Caco-2 (cell line): ENCODE measurements at regions of chr4 and their contacts with region 1.

Region 1: DNA sequence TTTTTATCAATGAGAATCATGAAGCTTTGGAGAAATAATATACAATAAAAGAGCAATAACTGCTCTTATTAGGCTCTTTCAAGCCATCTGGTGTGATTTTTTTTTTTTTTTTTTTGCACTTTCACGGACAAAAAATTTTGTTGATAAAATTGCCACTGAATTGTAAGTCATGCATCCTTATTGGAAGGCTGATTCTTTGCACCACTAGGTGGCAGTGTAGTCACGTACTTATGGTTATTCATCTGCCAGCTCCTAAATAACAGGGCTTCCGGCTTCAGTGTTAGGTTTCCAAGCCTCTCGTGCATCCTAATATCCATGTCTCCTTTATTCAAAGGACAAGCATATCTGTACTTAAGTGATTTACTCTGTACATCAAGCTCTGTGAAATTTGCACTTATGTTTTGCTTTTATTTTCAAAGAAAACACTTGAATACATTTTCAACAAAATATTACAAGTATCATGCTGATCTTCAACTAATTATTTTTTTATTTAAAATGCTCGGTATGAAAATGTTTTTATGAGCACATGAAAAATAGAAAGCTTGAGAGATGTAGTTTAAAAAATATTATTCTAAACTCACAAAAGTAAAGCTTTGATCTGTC is 1578.3 kb upstream of the TENM3 start:
- DNase-seq: peak; percentile 66 to 67
- H3K4me3 ChIP-seq: no peak overlapping the region
- H3K4me3 Mint-ChIP-seq: no peak overlapping the region
- H3K27ac Mint-ChIP-seq: no peak overlapping the region
- H3K4me1 ChIP-seq: no peaks in the 10 kb centered on the region
- H3K4me1 Mint-ChIP-seq: no peaks in the 10 kb centered on the region
- H3K27me3 ChIP-seq: no peaks in the 10 kb centered on the region
- H3K27me3 Mint-ChIP-seq: no peaks in the 10 kb centered on the region
- CTCF ChIP-seq: peak; percentile 50 to 62

Region 2: GRCh38 chr4:180028682-180029081 is 636.2 kb before region 1 on chr4:
- CTCF ChIA-PET with region 1: no interaction called
- POLR2A ChIA-PET with region 1: no interaction called
- intact Hi-C with region 1: no loop called
- DNase-seq: peak; percentile 64 to 65
- H3K4me3 ChIP-seq: no peak overlapping the region
- H3K4me3 Mint-ChIP-seq: no peak overlapping the region
- H3K27ac Mint-ChIP-seq: no peak overlapping the region
- H3K4me1 ChIP-seq: no peaks in the 10 kb centered on the region
- H3K4me1 Mint-ChIP-seq: no peaks in the 10 kb centered on the region
- H3K27me3 ChIP-seq: no peaks in the 10 kb centered on the region
- H3K27me3 Mint-ChIP-seq: peaks cover 4% of the 10 kb centered on the region
- CTCF ChIP-seq: peak; percentile 45 to 58

Region 3: DNA sequence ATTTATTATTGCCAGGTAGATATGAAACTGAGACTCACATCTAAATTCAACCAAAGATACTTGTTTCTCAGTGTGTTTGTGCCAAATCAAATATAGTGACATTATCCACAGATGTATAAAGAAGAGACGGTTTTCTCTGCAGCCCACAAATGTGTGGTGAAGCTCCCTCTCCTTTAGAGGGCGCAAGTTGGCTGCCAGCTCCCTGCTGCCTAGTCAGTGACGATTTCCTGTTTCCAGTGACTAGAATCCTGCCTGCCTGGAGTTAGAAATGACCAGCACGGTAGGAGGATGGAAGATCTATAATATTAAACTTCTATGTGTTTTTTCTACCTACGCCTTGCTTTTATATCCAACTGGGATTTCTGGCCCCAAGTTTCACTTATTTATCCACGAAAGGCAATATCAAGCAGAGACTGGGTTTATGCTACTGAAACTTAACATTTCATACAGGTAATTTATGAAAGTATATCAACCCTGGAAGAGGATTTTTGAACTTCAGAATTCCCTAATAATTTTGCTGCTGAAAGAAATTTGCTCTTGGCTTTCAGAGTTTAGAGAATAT is 215.4 kb before region 1 on chr4:
- CTCF ChIA-PET with region 1: no interaction called
- POLR2A ChIA-PET with region 1: no interaction called
- intact Hi-C with region 1: loop called (anchors 2 kb)
- DNase-seq: peak; percentile 37 to 51
- H3K4me3 ChIP-seq: no peak overlapping the region
- H3K4me3 Mint-ChIP-seq: no peak overlapping the region
- H3K27ac Mint-ChIP-seq: no peak overlapping the region
- H3K4me1 ChIP-seq: no peaks in the 10 kb centered on the region
- H3K4me1 Mint-ChIP-seq: no peaks in the 10 kb centered on the region
- H3K27me3 ChIP-seq: no peaks in the 10 kb centered on the region
- H3K27me3 Mint-ChIP-seq: no peaks in the 10 kb centered on the region
- CTCF ChIP-seq: peak; percentile 47 to 54

Region 4: GRCh38 chr4:180828440-180829018 is 163.7 kb after region 1 on chr4:
- CTCF ChIA-PET with region 1: no interaction called
- POLR2A ChIA-PET with region 1: no interaction called
- intact Hi-C with region 1: loop called (anchors 5 kb)
- DNase-seq: peak in 1 of 2 experiments; percentile 17
- H3K4me3 ChIP-seq: no peak overlapping the region
- H3K4me3 Mint-ChIP-seq: no peak overlapping the region
- H3K27ac Mint-ChIP-seq: no peak overlapping the region
- H3K4me1 ChIP-seq: no peaks in the 10 kb centered on the region
- H3K4me1 Mint-ChIP-seq: no peaks in the 10 kb centered on the region
- H3K27me3 ChIP-seq: no peaks in the 10 kb centered on the region
- H3K27me3 Mint-ChIP-seq: peaks cover 9% of the 10 kb centered on the region
- CTCF ChIP-seq: peak; percentile 51 to 54

Region 5: DNA sequence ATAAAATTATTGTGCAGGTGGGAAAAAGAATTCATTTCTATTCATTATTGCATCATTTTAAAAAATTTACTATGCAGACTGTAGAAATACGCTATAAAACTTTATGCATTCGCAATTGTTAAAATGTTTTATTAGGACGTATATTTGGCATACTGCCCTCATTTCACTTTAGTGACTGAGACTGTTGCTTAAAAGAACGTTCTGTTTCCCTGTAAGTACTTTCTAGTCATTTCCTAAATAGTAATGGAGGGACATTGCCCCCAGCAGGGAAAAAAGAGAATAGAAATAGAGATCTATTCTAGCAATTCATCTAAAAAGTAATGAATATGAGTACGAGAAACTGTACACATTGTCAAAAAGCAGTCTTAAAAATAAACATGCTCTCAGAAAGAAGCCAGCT is 282.6 kb after region 1 on chr4:
- CTCF ChIA-PET with region 1: no interaction called
- POLR2A ChIA-PET with region 1: no interaction called
- intact Hi-C with region 1: loop called (anchors 5 kb)
- DNase-seq: no peak
- H3K4me3 ChIP-seq: no peak overlapping the region
- H3K4me3 Mint-ChIP-seq: no peak overlapping the region
- H3K27ac Mint-ChIP-seq: no peak overlapping the region
- H3K4me1 ChIP-seq: no peaks in the 10 kb centered on the region
- H3K4me1 Mint-ChIP-seq: no peaks in the 10 kb centered on the region
- H3K27me3 ChIP-seq: no peaks in the 10 kb centered on the region
- H3K27me3 Mint-ChIP-seq: no peaks in the 10 kb centered on the region
- CTCF ChIP-seq: no peak